GM12878 (cell line): ENCODE measurements at regions of chr19 and their contacts with region 1.

Region 1: DNA sequence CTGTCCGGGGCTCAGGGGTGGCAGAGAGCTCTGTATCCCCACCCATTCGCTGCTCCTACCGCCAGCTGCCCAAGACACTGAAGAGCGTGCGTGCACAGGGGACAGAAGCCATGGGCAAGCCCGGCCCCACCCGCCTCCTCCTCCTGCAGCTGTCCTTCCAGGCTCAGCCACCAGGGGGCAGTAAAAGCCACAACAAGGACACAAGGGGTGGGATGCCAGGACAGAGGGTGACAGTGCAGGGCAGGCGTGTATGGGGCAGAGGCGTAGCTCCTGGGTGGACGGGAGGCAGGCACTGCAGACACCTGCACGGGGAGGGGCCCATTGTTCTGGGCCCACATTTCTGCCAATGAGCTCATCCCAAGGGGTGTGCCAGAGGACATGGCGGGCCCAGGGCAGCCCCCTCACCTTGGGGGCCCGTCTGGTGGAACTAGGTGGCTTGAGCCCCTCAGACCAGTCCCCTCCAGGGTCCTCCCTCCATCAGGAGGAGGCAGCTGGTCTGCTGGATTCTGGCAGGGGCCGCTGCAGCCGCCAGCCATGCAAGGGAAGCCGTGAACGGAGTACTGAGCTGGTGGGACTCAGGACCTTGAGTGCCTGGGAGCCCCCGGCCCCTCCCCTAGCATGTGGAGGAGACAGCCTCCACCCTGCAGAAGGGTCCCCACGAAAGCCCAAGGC is 61.1 kb downstream of the MLLT1 start:
- DNase-seq: peak; percentile 35
- ATAC-seq: peak; percentile 97
- H3K4me3 ChIP-seq: no peak overlapping the region
- H3K27ac ChIP-seq: no peak overlapping the region
- H3K4me1 ChIP-seq: no peaks in the 10 kb centered on the region
- H3K27me3 ChIP-seq: no peaks in the 10 kb centered on the region
- CTCF ChIP-seq: peak; percentile 92 to 96 (median 94)
- EP300 ChIP-seq: no peak
- POLR2A ChIP-seq: no peak; the same call in 1 of the 2 replicates
- RAD21 ChIP-seq: peak; percentile 95

Region 2: DNA sequence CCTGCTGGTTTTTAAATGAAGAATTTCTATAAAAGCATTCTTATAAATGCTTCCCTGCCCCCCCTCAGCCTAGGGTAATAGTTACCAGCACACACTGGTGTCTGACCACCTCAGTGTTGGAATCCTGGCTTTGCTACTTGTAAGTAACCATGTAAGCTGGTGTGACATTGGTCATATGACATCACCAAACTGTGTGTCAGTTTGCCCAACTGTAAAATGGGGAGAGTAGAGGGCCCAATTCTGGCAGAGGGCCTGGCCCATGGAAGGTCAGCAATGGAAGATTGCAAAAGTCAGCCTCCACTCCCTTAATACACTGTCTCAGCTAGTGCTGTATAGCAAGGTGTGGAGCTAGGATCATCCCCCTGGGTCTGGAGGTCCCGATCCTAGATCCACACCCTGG is 51.5 kb before region 1 on chr19:
- CTCF ChIA-PET with region 1: interaction called, 14 read pairs
- POLR2A ChIA-PET with region 1: no interaction called
- RAD21 ChIA-PET with region 1: no interaction called
- SMC1A ChIA-PET with region 1: interaction called, 3 read pairs
- in situ Hi-C with region 1: no loop called
- intact Hi-C with region 1: no loop called
- DNase-seq: no peak
- ATAC-seq: no peak
- H3K4me3 ChIP-seq: no peak overlapping the region
- H3K27ac ChIP-seq: no peak overlapping the region
- H3K4me1 ChIP-seq: no peaks in the 10 kb centered on the region
- H3K27me3 ChIP-seq: no peaks in the 10 kb centered on the region
- CTCF ChIP-seq: no peak
- EP300 ChIP-seq: no peak
- POLR2A ChIP-seq: no peak
- RAD21 ChIP-seq: no peak

Region 3: DNA sequence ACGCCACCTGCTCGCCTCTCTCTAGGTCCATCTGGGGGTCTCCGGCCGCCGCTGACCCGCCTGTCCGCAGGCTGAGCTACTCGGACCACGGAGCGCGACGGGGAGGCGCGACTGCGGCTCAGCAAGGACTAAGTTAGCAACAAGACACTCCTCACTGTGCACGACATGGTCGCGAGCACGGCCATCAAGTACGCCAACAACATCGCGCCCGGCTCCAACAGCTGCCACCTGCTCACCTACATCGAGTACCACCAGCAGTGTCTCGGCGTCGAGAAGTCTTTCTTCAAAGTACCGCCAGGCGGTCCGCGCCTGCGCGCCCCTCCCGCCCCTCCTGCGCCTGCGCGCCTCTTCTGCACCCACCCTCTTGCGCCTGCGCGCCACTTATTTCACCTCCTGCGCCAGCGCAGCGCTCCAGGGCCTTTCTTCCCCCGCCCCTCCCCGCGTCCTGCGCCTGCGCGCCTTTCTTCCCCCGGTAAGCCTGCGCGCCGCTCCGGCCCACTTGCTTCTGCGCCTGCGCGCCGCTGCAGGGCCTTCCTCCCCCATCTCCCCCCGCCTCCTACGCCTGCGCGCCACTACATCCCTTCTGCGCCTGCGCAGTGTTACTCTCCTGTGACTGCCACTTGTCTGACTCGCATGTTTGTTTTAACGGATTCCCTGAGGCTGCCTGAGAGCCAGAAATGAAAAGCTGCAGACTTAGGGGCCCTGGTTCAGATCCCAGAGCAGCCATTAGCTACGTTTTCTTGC is 19.2 kb before region 1 on chr19:
- CTCF ChIA-PET with region 1: interaction called, 11 read pairs
- POLR2A ChIA-PET with region 1: no interaction called
- RAD21 ChIA-PET with region 1: interaction called, 4 read pairs
- SMC1A ChIA-PET with region 1: interaction called, 9 read pairs
- in situ Hi-C with region 1: no loop called
- intact Hi-C with region 1: no loop called
- DNase-seq: peak; percentile 95
- ATAC-seq: peak; percentile 91
- H3K4me3 ChIP-seq: peak overlapping the region; percentile 79
- H3K27ac ChIP-seq: peak overlapping the region; percentile 78
- H3K4me1 ChIP-seq: peaks cover 18% of the 10 kb centered on the region
- H3K27me3 ChIP-seq: no peaks in the 10 kb centered on the region
- CTCF ChIP-seq: peak in 2 of 3 experiments; percentile 31 to 37; a peak in 2 of 6 replicates
- EP300 ChIP-seq: no peak
- POLR2A ChIP-seq: peak; percentile 92
- RAD21 ChIP-seq: no peak

Region 4: DNA sequence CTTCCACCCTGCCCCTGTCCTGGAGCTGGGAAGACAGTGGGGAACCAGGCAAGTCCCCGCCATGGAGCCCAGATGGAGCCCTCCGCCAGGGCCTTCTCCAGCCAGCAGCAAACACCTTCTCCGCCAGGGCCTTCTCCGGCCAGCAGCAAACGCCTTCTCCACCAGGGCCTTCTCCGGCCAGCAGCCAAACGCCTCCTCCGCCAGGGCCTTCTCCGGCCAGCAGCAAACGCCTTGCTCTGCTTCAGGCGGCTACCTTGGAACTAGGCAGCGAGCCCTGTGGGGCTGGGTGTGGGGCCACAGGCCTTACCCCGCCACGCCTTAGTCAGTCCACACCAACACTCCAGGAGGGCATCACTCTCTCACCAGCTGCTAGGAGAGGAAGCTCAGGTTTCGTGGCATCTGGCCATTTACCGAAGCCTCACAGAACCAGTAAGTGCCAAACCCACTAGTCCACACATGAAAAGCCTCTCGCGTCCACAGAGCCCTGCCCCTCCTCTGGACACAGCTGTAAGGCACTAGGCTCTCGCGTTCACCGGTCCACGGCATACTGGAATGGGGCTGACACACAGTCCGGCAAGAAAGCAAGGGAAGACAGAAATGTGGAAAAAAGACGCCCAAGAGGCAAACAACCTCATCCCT is 20.1 kb after region 1 on chr19:
- CTCF ChIA-PET with region 1: interaction called, 10 read pairs
- POLR2A ChIA-PET with region 1: interaction called, 3 read pairs
- RAD21 ChIA-PET with region 1: no interaction called
- SMC1A ChIA-PET with region 1: no interaction called
- in situ Hi-C with region 1: no loop called
- intact Hi-C with region 1: no loop called
- DNase-seq: no peak
- ATAC-seq: no peak
- H3K4me3 ChIP-seq: no peak overlapping the region
- H3K27ac ChIP-seq: no peak overlapping the region
- H3K4me1 ChIP-seq: peaks cover 4% of the 10 kb centered on the region
- H3K27me3 ChIP-seq: no peaks in the 10 kb centered on the region
- CTCF ChIP-seq: no peak
- EP300 ChIP-seq: no peak
- POLR2A ChIP-seq: no peak
- RAD21 ChIP-seq: no peak

Region 5: GRCh38 chr19:6297202-6297601 is 78.6 kb after region 1 on chr19:
- CTCF ChIA-PET with region 1: interaction called, 30 read pairs
- POLR2A ChIA-PET with region 1: no interaction called
- RAD21 ChIA-PET with region 1: interaction called, 7 read pairs
- SMC1A ChIA-PET with region 1: interaction called, 10 read pairs
- in situ Hi-C with region 1: no loop called
- intact Hi-C with region 1: loop called (anchors 1 kb)
- DNase-seq: no peak
- ATAC-seq: no peak
- H3K4me3 ChIP-seq: no peak overlapping the region
- H3K27ac ChIP-seq: no peak overlapping the region
- H3K4me1 ChIP-seq: no peaks in the 10 kb centered on the region
- H3K27me3 ChIP-seq: no peaks in the 10 kb centered on the region
- CTCF ChIP-seq: no peak
- EP300 ChIP-seq: no peak
- POLR2A ChIP-seq: no peak
- RAD21 ChIP-seq: no peak

Region 6: DNA sequence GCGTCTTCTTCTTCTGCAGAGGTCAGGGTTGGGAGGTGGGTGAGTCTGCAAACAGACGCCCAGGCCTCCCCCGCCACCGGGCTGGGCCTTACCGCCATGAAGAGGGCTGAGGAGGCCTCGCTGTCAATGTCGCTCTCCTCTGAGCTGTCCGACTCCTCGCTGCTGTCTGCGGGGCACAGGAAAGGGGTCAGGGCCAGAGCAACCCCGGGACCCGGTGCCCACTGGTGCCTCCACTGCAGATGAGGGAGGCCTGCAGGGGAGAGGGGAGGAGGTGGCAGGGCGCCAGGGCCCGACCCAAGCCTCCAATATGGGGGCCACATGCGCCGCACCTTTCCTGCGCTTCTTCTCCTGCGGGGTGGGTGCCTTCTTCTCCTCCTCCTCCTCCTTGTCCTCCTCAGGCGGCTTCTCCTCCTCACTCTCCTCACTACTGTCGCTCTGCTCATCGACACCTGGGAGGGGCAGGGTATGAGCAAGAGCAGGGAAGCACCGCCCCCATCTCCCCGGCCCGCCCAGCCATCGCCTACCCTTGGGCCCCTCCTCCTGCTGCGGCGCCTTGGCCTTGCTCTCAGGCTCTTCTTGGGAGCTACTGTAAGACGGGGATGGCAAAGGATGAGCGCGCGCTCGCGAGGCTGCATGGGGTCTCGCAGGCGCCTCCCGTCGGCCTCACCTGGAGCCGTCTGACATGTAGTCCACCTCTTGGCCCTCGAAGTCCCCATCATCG is 162.6 kb after region 1 on chr19:
- CTCF ChIA-PET with region 1: no interaction called
- POLR2A ChIA-PET with region 1: no interaction called
- RAD21 ChIA-PET with region 1: no interaction called
- SMC1A ChIA-PET with region 1: no interaction called
- in situ Hi-C with region 1: no loop called
- intact Hi-C with region 1: no loop called
- DNase-seq: no peak
- ATAC-seq: no peak
- H3K4me3 ChIP-seq: no peak overlapping the region
- H3K27ac ChIP-seq: no peak overlapping the region
- H3K4me1 ChIP-seq: no peaks in the 10 kb centered on the region
- H3K27me3 ChIP-seq: no peaks in the 10 kb centered on the region
- CTCF ChIP-seq: no peak
- EP300 ChIP-seq: no peak
- POLR2A ChIP-seq: no peak
- RAD21 ChIP-seq: no peak

Region 7: GRCh38 chr19:6862673-6863078 is 644.0 kb after region 1 on chr19:
- CTCF ChIA-PET with region 1: interaction called, 15 read pairs
- POLR2A ChIA-PET with region 1: no interaction called
- RAD21 ChIA-PET with region 1: interaction called, 11 read pairs
- SMC1A ChIA-PET with region 1: interaction called, 4 read pairs
- in situ Hi-C with region 1: no loop called
- intact Hi-C with region 1: no loop called
- DNase-seq: peak; percentile 80
- ATAC-seq: peak; percentile 94
- H3K4me3 ChIP-seq: peak overlapping the region; percentile 67; the same call in 1 of the 2 replicates
- H3K27ac ChIP-seq: peak overlapping the region; percentile 56; the same call in 1 of the 2 replicates
- H3K4me1 ChIP-seq: peaks cover 11% of the 10 kb centered on the region
- H3K27me3 ChIP-seq: no peaks in the 10 kb centered on the region
- CTCF ChIP-seq: peak; percentile 92 to 99 (median 99); a peak in 5 of 6 replicates
- EP300 ChIP-seq: no peak
- POLR2A ChIP-seq: peak; percentile 65
- RAD21 ChIP-seq: peak; percentile 88